Right cardiac atrium (tissue), 5 donors: ENCODE measurements at regions of chr3 and their contacts with region 1.

Region 1: GRCh38 chr3:167837466-167837865 is 101.9 kb downstream of the SERPINI1 start:
- DNase-seq: no peak
- ATAC-seq: no peak
- H3K4me3 ChIP-seq: peak overlapping the region; percentile 35
- H3K27ac ChIP-seq: no peak overlapping the region
- H3K4me1 ChIP-seq: no peaks in the 10 kb centered on the region
- H3K27me3 ChIP-seq: no peaks in the 10 kb centered on the region

Region 2: DNA sequence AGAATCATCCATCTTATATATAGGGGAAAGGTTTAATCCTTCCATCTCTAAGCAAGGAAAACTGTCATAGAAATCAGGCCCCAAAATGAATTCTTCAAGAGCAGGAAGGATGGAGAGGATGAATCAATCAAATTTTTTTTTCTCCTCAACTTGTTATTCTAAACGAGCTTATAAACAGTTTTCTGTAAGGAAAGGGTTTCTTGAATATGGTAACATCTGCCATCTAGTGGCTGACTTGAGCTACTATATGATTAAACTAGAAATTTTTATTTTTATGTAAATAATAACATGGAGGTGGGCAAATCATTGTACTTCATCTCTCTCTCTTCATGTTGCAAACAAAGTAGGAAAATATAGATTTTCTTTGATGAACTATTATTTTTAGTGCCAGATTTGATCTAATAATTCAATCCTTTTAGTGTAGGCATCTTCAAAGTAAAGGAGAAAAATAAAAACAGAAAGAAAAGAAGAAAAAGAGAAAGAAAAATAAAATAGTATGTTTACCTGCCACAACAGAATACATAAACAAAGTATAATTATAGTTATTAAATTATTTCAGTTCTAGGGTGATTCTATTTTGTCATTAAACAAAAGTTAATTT is 44.7 kb after region 1 on chr3:
- intact Hi-C with region 1: loop called in 1 of 4 experiments (anchors 5 kb)
- DNase-seq: no peak
- ATAC-seq: peak in 1 of 2 donors; percentile 31
- H3K4me3 ChIP-seq: peak overlapping the region; percentile 29
- H3K27ac ChIP-seq: no peak overlapping the region
- H3K4me1 ChIP-seq: no peaks in the 10 kb centered on the region
- H3K27me3 ChIP-seq: no peaks in the 10 kb centered on the region